ENCODE measurements at regions of chr5 and their contacts with region 1.

Region 1: GRCh38 chr5:56270568-56271392 is 37.6 kb upstream of the ANKRD55 start:
- DNase-seq: peak; percentile 77
- H3K4me3 ChIP-seq: no peak overlapping the region
- H3K27ac ChIP-seq: no peak overlapping the region
- H3K4me1 ChIP-seq: no peaks in the 10 kb centered on the region
- H3K27me3 ChIP-seq: no peaks in the 10 kb centered on the region
- CTCF ChIP-seq: peak; percentile 99

Region 2: GRCh38 chr5:56358703-56359681 is 88.2 kb after region 1 on chr5:
- intact Hi-C with region 1: no loop called
- DNase-seq: no peak
- H3K4me3 ChIP-seq: no peak overlapping the region
- H3K27ac ChIP-seq: no peak overlapping the region
- H3K4me1 ChIP-seq: no peaks in the 10 kb centered on the region
- H3K27me3 ChIP-seq: no peaks in the 10 kb centered on the region
- CTCF ChIP-seq: no peak

Region 3: DNA sequence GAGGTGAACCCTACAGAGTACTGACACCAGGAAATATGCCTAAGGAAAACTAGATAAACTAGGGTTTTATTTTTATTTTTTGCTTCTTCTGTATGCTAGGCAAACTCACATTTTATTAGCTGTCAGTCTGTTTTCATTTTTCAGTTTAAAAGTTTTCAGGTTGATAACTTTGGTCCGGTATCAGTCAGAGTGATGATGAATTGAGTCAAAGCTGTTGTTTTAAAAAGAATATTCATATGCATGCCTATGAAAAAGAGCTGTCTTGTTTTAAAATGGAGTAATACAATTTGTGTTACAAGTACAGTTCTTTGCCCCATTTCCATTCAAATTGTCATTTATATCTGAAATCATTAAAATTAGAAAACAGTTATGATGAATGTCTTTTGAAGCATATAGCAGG is 567.2 kb after region 1 on chr5:
- intact Hi-C with region 1: loop called (anchors 2 kb)
- DNase-seq: no peak
- H3K4me3 ChIP-seq: no peak overlapping the region
- H3K27ac ChIP-seq: no peak overlapping the region
- H3K4me1 ChIP-seq: no peaks in the 10 kb centered on the region
- H3K27me3 ChIP-seq: no peaks in the 10 kb centered on the region
- CTCF ChIP-seq: no peak

Region 4: DNA sequence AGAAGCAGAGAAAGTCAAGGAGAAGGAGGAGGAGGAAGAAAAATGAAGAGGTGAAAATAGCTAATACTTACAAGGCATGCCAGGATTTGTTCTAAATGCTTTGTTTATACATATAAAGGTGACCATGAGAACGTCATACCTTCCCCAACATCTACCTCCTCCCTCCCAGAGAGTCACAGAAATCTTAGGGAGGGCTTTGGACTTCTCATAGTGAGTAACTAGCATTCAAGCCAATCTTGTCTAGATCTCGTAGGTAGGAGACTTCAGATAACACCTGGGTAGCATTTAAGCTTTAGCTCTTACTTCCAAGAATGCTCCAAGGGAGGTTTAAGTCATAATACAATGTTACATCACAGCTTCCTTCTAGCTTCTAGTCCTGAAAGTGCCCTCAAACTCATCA is 866.6 kb after region 1 on chr5:
- intact Hi-C with region 1: loop called (anchors 10 kb)
- DNase-seq: no peak
- H3K4me3 ChIP-seq: no peak overlapping the region
- H3K27ac ChIP-seq: no peak overlapping the region
- H3K4me1 ChIP-seq: no peaks in the 10 kb centered on the region
- H3K27me3 ChIP-seq: no peaks in the 10 kb centered on the region
- CTCF ChIP-seq: no peak